ENCODE measurements at regions of chr2 and their contacts with region 1.

Region 1: GRCh38 chr2:86079981-86080911 is 25.4 kb downstream of the POLR1A start:
- DNase-seq: peak; percentile 56 to 82
- ATAC-seq: peak; percentile 87 to 95
- H3K4me3 ChIP-seq: no peak overlapping the region
- H3K27ac ChIP-seq: peak overlapping the region in 1 of 2 experiments; percentile 53; a peak in 3 of 6 replicates
- H3K4me1 ChIP-seq: peaks cover 22% of the 10 kb centered on the region; the same call in 2 of the 3 replicates
- CTCF ChIP-seq: peak; percentile 93
- EP300 ChIP-seq: no peak
- POLR2A ChIP-seq: no peak
- RAD21 ChIP-seq: peak; percentile 86 to 89

Region 2: GRCh38 chr2:85723707-85724360 is 356.4 kb before region 1 on chr2:
- CTCF ChIA-PET with region 1: interaction called, 32 read pairs
- POLR2A ChIA-PET with region 1: no interaction called
- DNase-seq: no peak
- ATAC-seq: no peak
- H3K4me3 ChIP-seq: no peak overlapping the region
- H3K27ac ChIP-seq: no peak overlapping the region; a peak in 1 of 6 replicates
- H3K4me1 ChIP-seq: peaks cover 12% of the 10 kb centered on the region
- CTCF ChIP-seq: no peak
- EP300 ChIP-seq: no peak
- POLR2A ChIP-seq: no peak
- RAD21 ChIP-seq: no peak

Region 3: DNA sequence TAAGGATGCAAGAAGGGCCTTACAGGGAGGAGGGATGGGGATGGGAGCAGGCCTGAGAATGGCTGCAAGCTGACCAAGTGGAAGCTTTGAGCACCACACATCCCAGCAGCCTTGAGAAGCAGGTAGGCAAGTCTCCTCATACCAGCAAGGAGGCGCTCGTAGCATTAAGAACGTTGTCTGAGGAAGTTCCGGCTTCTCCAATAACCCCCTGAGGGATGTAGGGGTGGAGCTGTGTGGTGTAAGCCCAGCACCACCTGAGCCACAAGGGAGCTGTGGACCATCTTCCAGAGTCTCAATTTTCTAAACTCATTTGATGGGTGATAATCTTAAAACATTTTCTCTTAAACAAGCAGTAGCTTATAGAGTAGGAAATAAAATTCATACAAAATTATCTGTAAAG is 242.1 kb before region 1 on chr2:
- CTCF ChIA-PET with region 1: interaction called, 766 read pairs
- POLR2A ChIA-PET with region 1: no interaction called
- DNase-seq: peak in 1 of 2 experiments; percentile 36
- ATAC-seq: peak in 1 of 2 experiments; percentile 57; a peak in 4 of 6 replicates
- H3K4me3 ChIP-seq: no peak overlapping the region
- H3K27ac ChIP-seq: no peak overlapping the region
- H3K4me1 ChIP-seq: no peaks in the 10 kb centered on the region
- CTCF ChIP-seq: no peak
- EP300 ChIP-seq: no peak
- POLR2A ChIP-seq: no peak
- RAD21 ChIP-seq: no peak; a peak in 1 of 5 replicates

Region 4: GRCh38 chr2:85888684-85889626 is 191.3 kb before region 1 on chr2 and contains the start of gene ST3GAL5:
- CTCF ChIA-PET with region 1: interaction called, 238 read pairs
- POLR2A ChIA-PET with region 1: interaction called, 4 read pairs
- DNase-seq: peak; percentile 81 to 92
- ATAC-seq: peak; percentile 74 to 84
- H3K4me3 ChIP-seq: peak within 1 kb of the TSS; percentile 77
- H3K27ac ChIP-seq: peak within 1 kb of the TSS; percentile 88 to 97
- H3K4me1 ChIP-seq: peaks cover 67% of the 10 kb centered on the region
- CTCF ChIP-seq: peak; percentile 97
- EP300 ChIP-seq: peak in 1 of 2 experiments; percentile 28; a peak in 1 of 5 replicates
- POLR2A ChIP-seq: peak; percentile 22
- RAD21 ChIP-seq: peak; percentile 55 to 81
- polyA plus RNA-seq, gene ST3GAL5: 115 and 119 TPM in 2 replicates

Region 5: DNA sequence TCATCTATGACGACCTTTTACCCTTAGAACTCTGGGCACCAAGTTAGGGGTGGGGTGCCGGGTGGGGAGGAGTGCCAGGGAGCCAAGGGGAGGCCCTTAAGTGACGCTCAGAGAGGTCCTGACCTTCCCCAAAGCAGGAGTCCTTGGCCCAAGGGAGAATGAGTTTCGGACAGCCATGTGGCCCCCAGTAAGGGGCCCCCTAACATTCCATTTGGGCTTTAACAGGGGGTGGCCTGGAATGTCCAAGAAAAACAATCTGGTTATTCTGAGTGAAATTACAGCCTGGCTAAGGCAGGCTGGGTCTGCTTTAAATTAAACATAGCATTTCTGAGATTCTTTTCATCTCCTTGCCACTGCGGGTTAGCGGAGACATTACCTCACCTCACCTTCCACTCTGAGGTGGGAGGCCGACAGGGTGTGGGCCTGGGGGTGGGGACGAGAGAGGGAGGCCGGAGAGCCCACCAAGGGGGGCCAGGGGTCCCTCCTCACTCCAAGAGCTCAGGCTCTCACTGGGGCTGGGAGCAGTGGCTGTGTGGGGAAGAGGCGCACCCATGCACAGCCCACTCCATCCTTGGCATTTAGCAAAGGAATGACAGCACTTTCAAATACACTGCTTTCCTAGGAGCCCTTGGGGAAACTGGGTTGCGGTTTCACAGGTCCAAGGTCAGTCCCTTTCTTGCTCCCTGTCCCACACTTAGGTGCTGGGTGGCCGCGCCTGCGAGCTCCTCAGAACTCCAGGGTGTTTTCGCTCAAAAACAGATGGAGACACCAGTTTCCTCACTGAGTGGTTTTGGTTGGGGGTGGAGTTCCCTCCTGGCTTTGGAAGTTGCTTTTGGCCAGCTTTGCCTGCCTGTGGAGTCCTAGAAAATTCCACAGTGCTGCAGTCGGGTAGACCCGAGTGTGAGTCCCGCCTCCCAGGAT is 81.9 kb before region 1 on chr2:
- CTCF ChIA-PET with region 1: interaction called, 23 read pairs
- POLR2A ChIA-PET with region 1: no interaction called
- DNase-seq: no peak
- ATAC-seq: peak in 1 of 2 experiments; percentile 54; a peak in 3 of 6 replicates
- H3K4me3 ChIP-seq: no peak overlapping the region
- H3K27ac ChIP-seq: peak overlapping the region in 1 of 2 experiments; percentile 60; a peak in 3 of 6 replicates
- H3K4me1 ChIP-seq: peaks cover 40% of the 10 kb centered on the region
- CTCF ChIP-seq: no peak
- EP300 ChIP-seq: no peak
- POLR2A ChIP-seq: no peak
- RAD21 ChIP-seq: no peak

Region 6: GRCh38 chr2:86054535-86055082 is 25.6 kb before region 1 on chr2:
- CTCF ChIA-PET with region 1: interaction called, 29 read pairs
- POLR2A ChIA-PET with region 1: no interaction called
- DNase-seq: no peak
- ATAC-seq: no peak
- H3K4me3 ChIP-seq: no peak overlapping the region
- H3K27ac ChIP-seq: no peak overlapping the region
- H3K4me1 ChIP-seq: no peaks in the 10 kb centered on the region
- CTCF ChIP-seq: no peak
- EP300 ChIP-seq: no peak
- POLR2A ChIP-seq: no peak
- RAD21 ChIP-seq: no peak